ENCODE measurements at regions of chr10 and their contacts with region 1.

Region 1: DNA sequence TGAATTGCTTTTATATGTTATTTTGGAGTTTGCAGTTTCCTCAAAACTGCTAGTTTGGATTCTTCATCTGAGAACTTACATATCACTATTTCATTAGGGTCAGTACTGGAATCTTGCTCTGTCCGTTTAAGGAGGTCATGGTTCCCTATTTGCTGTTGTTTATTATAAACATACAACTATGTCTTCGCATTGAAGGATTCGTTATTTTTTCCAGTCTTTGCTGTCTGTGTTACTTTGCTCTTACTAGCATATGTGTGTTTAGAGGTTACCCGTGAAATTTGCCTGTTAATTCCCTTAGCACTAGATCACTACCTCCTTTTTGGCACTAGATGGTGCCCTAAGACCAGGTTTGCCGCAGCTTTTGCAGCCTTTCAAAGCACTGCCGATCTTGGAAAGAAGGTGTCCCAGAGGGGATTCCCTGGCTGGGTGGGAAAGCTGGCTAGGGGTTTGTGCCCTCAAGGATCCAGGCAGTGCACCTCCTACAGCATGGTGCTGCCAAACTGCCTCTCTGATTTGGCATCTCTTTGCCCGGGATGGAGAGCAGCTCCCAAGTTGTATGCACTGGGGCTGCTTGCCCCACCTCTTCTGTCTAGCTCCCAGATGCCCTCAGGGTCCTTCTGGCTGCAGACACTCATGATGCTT is 103.1 kb upstream of the APBB1IP start:
- DNase-seq: peak; percentile 31 to 85 (median 63)
- ATAC-seq: peak; percentile 92
- H3K4me3 ChIP-seq: peak overlapping the region; percentile 36 to 50
- H3K4me3 Mint-ChIP-seq: peak overlapping the region; percentile 78
- H3K27ac ChIP-seq: no peak overlapping the region
- H3K27ac Mint-ChIP-seq: peak overlapping the region; percentile 16
- H3K4me1 ChIP-seq: no peaks in the 10 kb centered on the region
- H3K4me1 Mint-ChIP-seq: peaks cover 5% of the 10 kb centered on the region
- H3K27me3 ChIP-seq: no peaks in the 10 kb centered on the region
- H3K27me3 Mint-ChIP-seq: no peaks in the 10 kb centered on the region
- CTCF ChIP-seq: peak; percentile 99

Region 2: GRCh38 chr10:25875556-25876165 is 459.4 kb before region 1 on chr10:
- CTCF ChIA-PET with region 1: no interaction called
- POLR2A ChIA-PET with region 1: no interaction called
- intact Hi-C with region 1: loop called in 1 of 2 experiments (anchors 2 kb)
- DNase-seq: peak; percentile 21 to 66 (median 59)
- ATAC-seq: peak; percentile 62
- H3K4me3 ChIP-seq: no peak overlapping the region
- H3K4me3 Mint-ChIP-seq: no peak overlapping the region
- H3K27ac ChIP-seq: no peak overlapping the region
- H3K27ac Mint-ChIP-seq: no peak overlapping the region
- H3K4me1 ChIP-seq: no peaks in the 10 kb centered on the region
- H3K4me1 Mint-ChIP-seq: no peaks in the 10 kb centered on the region
- H3K27me3 ChIP-seq: no peaks in the 10 kb centered on the region
- H3K27me3 Mint-ChIP-seq: no peaks in the 10 kb centered on the region
- CTCF ChIP-seq: peak; percentile 67

Region 3: DNA sequence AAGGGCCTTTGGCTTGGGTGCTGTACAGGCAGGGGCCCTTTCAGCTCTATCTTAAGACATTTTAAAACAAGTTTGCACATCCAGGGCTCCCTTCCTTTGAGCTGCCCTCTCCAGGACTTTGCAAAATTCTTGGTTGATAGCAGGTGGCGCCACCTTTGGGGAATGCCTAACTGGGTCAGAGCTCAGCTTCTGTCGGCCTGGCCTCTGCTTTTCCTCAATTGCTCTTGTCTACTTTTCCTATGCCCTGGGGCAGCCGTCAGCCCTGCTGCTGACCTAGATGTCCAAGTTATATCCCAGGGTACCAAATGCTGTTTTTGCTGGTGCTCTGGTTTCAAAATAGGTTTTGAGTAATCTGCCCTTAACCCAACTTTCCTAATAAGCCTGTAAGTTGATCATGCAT is 168.9 kb after region 1 on chr10:
- CTCF ChIA-PET with region 1: interaction called, 18 read pairs
- POLR2A ChIA-PET with region 1: no interaction called
- intact Hi-C with region 1: loop called in 1 of 2 experiments (anchors 5 kb)
- DNase-seq: peak in 6 of 9 experiments; percentile 27 to 53 (median 42)
- ATAC-seq: peak; percentile 48
- H3K4me3 ChIP-seq: no peak overlapping the region
- H3K4me3 Mint-ChIP-seq: no peak overlapping the region
- H3K27ac ChIP-seq: no peak overlapping the region
- H3K27ac Mint-ChIP-seq: peak overlapping the region; percentile 43
- H3K4me1 ChIP-seq: no peaks in the 10 kb centered on the region
- H3K4me1 Mint-ChIP-seq: peaks cover 31% of the 10 kb centered on the region
- H3K27me3 ChIP-seq: no peaks in the 10 kb centered on the region
- H3K27me3 Mint-ChIP-seq: no peaks in the 10 kb centered on the region
- CTCF ChIP-seq: peak; percentile 14

Region 4: GRCh38 chr10:26612151-26612915 is 277.3 kb after region 1 on chr10:
- CTCF ChIA-PET with region 1: interaction called, 3 read pairs
- POLR2A ChIA-PET with region 1: no interaction called
- intact Hi-C with region 1: loop called in 1 of 2 experiments (anchors 5 kb)
- DNase-seq: no peak
- ATAC-seq: no peak
- H3K4me3 ChIP-seq: no peak overlapping the region
- H3K4me3 Mint-ChIP-seq: no peak overlapping the region
- H3K27ac ChIP-seq: no peak overlapping the region
- H3K27ac Mint-ChIP-seq: no peak overlapping the region
- H3K4me1 ChIP-seq: no peaks in the 10 kb centered on the region
- H3K4me1 Mint-ChIP-seq: no peaks in the 10 kb centered on the region
- H3K27me3 ChIP-seq: no peaks in the 10 kb centered on the region
- H3K27me3 Mint-ChIP-seq: no peaks in the 10 kb centered on the region
- CTCF ChIP-seq: no peak

Region 5: GRCh38 chr10:26881600-26882331 is 546.7 kb after region 1 on chr10:
- CTCF ChIA-PET with region 1: interaction called, 20 read pairs
- POLR2A ChIA-PET with region 1: no interaction called
- intact Hi-C with region 1: loop called (anchors 1 kb)
- DNase-seq: peak in 2 of 9 experiments; percentile 68 to 71
- ATAC-seq: peak; percentile 64
- H3K4me3 ChIP-seq: no peak overlapping the region
- H3K4me3 Mint-ChIP-seq: no peak overlapping the region
- H3K27ac ChIP-seq: no peak overlapping the region
- H3K27ac Mint-ChIP-seq: no peak overlapping the region
- H3K4me1 ChIP-seq: no peaks in the 10 kb centered on the region
- H3K4me1 Mint-ChIP-seq: peaks cover 3% of the 10 kb centered on the region
- H3K27me3 ChIP-seq: peaks cover 0 to 2% of the 10 kb centered on the region in 2 experiments
- H3K27me3 Mint-ChIP-seq: peaks cover 23% of the 10 kb centered on the region
- CTCF ChIP-seq: peak; percentile 70

Region 6: DNA sequence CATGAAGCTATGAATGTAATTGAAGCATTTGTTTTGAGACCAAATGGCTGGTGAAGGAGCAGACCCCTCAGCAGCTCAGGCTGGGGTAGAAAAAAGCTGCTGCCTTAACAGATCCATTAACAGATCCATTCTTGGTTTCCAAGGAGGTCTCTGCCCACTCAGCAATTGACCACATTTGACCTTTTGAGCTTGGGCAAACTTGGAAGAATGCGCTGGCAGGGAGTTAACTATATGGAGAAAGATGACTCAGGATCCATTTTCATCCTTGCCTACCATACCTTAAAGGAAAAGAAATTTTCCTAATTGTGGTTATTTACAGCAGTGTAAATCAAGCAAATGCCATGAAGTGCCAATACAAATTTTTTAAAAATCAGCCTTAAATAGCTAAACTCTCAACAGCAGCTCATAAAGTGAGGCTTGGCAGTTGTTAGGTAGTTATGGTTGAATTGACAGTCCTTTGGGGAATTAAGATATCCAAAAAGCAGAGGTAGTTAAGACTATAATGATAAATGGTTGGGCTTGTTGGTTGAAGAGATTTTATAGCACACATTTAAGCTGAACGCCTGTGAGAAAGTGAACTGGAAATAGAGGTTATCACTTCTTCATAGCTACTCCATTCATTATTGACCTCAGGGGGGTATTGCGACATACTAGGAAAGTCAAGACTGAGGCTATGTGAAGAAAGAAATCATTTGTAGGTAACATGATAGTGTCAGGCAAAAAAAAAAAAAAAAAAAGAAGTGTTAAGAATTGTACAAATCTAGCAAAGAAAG is 1326.6 kb after region 1 on chr10:
- CTCF ChIA-PET with region 1: no interaction called
- POLR2A ChIA-PET with region 1: no interaction called
- intact Hi-C with region 1: loop called in 1 of 2 experiments (anchors 10 kb)
- DNase-seq: no peak
- ATAC-seq: no peak
- H3K4me3 ChIP-seq: no peak overlapping the region
- H3K4me3 Mint-ChIP-seq: no peak overlapping the region
- H3K27ac ChIP-seq: no peak overlapping the region
- H3K27ac Mint-ChIP-seq: no peak overlapping the region
- H3K4me1 ChIP-seq: no peaks in the 10 kb centered on the region
- H3K4me1 Mint-ChIP-seq: no peaks in the 10 kb centered on the region
- H3K27me3 ChIP-seq: peaks cover 0 to 5% of the 10 kb centered on the region in 2 experiments
- H3K27me3 Mint-ChIP-seq: peaks cover 43% of the 10 kb centered on the region
- CTCF ChIP-seq: no peak